GM23248 (cell line): ENCODE measurements at regions of chr12 and their contacts with region 1.

Region 1: DNA sequence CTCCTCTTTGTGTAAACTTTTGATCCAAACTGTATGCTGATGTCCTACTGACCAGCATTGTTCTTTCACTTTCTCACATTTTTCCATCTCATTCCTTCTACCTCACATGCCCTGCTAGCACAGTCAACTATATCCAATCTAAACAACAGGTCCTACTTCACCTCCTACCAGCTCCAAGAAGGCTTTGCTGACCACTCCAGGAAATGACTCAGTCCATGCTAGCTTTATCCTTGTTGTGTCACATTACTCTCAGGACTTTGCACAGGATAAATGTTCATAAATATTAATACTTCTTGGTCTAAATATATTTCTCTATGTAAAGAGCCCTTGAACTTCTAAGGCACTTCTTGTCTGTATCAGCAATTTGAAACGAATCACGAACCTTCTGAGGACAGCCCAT is 64.9 kb upstream of the PCED1B start:
- DNase-seq: peak; percentile 88
- H3K4me3 ChIP-seq: peak overlapping the region; percentile 37; the same call in 1 of the 2 replicates
- H3K27ac ChIP-seq: peak overlapping the region; percentile 69
- H3K4me1 ChIP-seq: peaks cover 31% of the 10 kb centered on the region
- H3K27me3 ChIP-seq: no peaks in the 10 kb centered on the region

Region 2: GRCh38 chr12:46675736-46676135 is 338.7 kb before region 1 on chr12:
- in situ Hi-C with region 1: loop called (anchors 10 kb)
- DNase-seq: peak; percentile 72
- H3K4me3 ChIP-seq: 0 out of 2 replicates have a peak overlapping the region, but pooled peaks have one; percentile 47
- H3K27ac ChIP-seq: peak overlapping the region; percentile 20
- H3K4me1 ChIP-seq: peaks cover 47% of the 10 kb centered on the region
- H3K27me3 ChIP-seq: no peaks in the 10 kb centered on the region